Right cardiac atrium (tissue), 5 donors: ENCODE measurements at regions of chr20 and their contacts with region 1.

Region 1: GRCh38 chr20:44683263-44684046 is 31.7 kb upstream of the CCN5 start:
- DNase-seq: peak in 1 of 3 donors; percentile 70
- ATAC-seq: peak; percentile 45 to 71
- H3K4me3 ChIP-seq: no peak overlapping the region
- H3K27ac ChIP-seq: no peak overlapping the region
- H3K4me1 ChIP-seq: no peaks in the 10 kb centered on the region
- H3K27me3 ChIP-seq: no peaks in the 10 kb centered on the region

Region 2: GRCh38 chr20:44733341-44734069 is 50.0 kb after region 1 on chr20:
- intact Hi-C with region 1: loop called (anchors 1 to 2 kb)
- DNase-seq: peak; percentile 72 to 89 (median 86)
- ATAC-seq: peak; percentile 37 to 49
- H3K4me3 ChIP-seq: no peak overlapping the region
- H3K27ac ChIP-seq: peak overlapping the region; percentile 5
- H3K4me1 ChIP-seq: peaks cover 7% of the 10 kb centered on the region
- H3K27me3 ChIP-seq: no peaks in the 10 kb centered on the region

Region 3: GRCh38 chr20:44861531-44862006 is 178.1 kb after region 1 on chr20:
- intact Hi-C with region 1: loop called in 3 of 4 experiments (anchors 10 kb)
- DNase-seq: peak; percentile 61 to 80 (median 67)
- ATAC-seq: peak; percentile 92 to 94
- H3K4me3 ChIP-seq: no peak overlapping the region
- H3K27ac ChIP-seq: no peak overlapping the region
- H3K4me1 ChIP-seq: no peaks in the 10 kb centered on the region
- H3K27me3 ChIP-seq: no peaks in the 10 kb centered on the region